ENCODE measurements at regions of chr19 and their contacts with region 1.

Region 1: DNA sequence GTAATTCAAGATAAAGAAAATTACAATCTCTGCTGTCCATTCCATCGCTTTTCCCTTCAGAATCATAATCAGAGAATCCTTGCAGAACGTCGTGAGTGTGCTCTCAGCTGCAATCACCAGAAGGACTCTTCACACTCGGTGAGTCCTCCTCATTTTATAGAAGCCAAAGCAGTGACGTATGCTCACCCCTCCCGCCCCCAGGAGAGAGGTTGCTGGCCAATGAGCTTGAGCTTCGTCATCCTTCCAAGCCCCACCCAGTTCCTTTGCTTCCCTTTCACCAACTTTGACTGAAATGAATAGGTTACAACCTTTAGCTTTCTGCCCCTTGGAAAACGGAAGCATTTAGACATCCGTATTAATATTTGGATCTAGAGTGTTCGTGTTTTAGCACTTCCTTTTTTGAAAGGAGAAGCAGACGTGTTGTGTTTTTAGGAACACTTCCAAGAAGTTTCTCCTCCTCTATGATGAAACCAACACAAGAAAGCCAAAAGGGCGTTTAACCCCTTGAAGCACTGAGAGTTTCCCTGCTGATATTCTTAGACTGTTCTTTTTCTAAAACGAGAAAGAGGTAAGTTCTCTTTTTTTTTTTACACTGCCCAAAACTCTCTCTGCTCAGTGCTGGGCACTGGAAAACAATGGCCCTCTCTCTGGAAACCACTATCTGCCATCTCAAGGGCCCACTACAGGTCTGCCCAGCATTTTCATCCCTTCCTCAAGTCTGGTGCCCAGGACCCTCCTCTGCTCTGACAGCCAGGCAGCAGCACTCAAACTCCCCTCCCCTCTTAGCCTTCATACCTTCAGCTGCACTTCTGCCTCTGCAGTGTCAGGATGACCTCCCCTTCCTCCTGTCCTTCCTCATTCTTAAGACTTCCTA is 44.3 kb upstream of the CEACAM21 start:
- DNase-seq: peak; percentile 74
- ATAC-seq: peak; percentile 78
- H3K4me3 Mint-ChIP-seq: peak overlapping the region; percentile 79
- H3K27ac Mint-ChIP-seq: peak overlapping the region; percentile 73
- H3K4me1 Mint-ChIP-seq: peaks cover 54% of the 10 kb centered on the region
- H3K27me3 Mint-ChIP-seq: no peaks in the 10 kb centered on the region

Region 2: GRCh38 chr19:41373993-41374392 is 157.7 kb before region 1 on chr19:
- POLR2A ChIA-PET with region 1: no interaction called
- DNase-seq: no peak
- ATAC-seq: no peak
- H3K4me3 Mint-ChIP-seq: no peak overlapping the region
- H3K27ac Mint-ChIP-seq: no peak overlapping the region
- H3K4me1 Mint-ChIP-seq: peaks cover 15% of the 10 kb centered on the region
- H3K27me3 Mint-ChIP-seq: no peaks in the 10 kb centered on the region

Region 3: DNA sequence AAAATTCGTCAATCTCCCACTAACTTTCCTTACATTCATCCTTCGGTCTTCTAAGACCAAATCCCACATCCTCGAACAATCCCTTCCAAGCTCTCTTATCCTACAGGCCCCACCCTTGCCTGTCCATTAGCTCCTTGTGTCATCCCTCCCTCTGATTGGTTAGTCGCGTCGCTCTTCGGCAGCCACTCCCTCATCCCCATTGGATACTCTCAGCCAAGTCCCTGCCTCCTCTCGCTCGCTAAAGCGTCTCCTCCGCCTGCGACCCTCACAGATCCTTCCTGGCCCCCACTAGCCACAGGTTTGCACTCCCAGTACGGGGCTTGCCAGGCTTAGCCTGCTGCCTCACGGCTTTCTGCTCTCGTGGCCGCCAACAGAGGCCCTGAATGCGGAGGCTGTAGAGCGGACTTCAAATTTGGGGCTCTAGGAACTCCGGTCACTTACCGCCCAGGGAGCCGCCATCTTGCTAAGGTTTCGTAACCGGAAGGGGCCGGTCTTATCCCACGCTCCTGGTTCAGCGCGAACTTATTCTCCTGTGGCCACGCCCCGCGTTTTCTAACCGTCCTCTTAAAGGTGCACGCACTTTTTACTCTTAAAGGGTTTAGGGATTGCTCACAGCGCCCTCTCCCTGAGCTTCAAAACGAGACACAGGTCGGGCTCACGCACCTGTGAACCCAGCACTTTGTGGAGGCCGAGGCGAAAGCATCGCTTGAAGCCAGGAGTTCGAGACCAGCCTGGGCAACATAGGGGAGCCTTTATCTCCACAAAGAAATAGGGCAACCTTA is 92.0 kb before region 1 on chr19 and contains the start of gene DMAC2:
- POLR2A ChIA-PET with region 1: interaction called, 14 read pairs
- DNase-seq: peak; percentile 89
- ATAC-seq: peak; percentile 96
- H3K4me3 Mint-ChIP-seq: no peak within 1 kb of the TSS
- H3K27ac Mint-ChIP-seq: peak within 1 kb of the TSS; percentile 47
- H3K4me1 Mint-ChIP-seq: peaks cover 12% of the 10 kb centered on the region
- H3K27me3 Mint-ChIP-seq: peaks cover 3% of the 10 kb centered on the region
- total RNA-seq, gene DMAC2: 41.3 to 42.6 TPM

Region 4: DNA sequence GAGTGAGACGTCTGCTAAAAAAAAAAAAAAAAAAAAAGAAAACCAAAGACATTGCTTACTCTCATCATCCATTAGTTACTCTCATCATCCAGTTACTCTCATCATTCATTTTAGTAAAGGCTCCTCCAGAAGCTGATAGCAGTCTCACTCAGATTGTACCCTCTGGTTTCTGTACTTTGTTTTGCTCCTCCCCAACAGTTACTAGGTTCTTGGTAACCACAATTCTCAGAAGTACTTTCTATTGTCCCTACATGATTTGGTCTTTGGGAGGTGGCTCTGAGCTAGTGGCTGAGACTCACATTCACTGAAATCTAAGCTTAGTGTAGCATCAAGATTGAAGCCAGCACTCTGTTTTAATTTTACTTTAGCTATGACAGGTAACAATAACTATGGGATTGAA is 74.4 kb before region 1 on chr19:
- POLR2A ChIA-PET with region 1: interaction called, 14 read pairs
- DNase-seq: no peak
- ATAC-seq: peak; percentile 99
- H3K4me3 Mint-ChIP-seq: peak overlapping the region; percentile 70
- H3K27ac Mint-ChIP-seq: peak overlapping the region; percentile 82
- H3K4me1 Mint-ChIP-seq: peaks cover 21% of the 10 kb centered on the region
- H3K27me3 Mint-ChIP-seq: peaks cover 8% of the 10 kb centered on the region

Region 5: GRCh38 chr19:41479757-41480191 is 51.9 kb before region 1 on chr19:
- POLR2A ChIA-PET with region 1: no interaction called
- DNase-seq: no peak
- ATAC-seq: no peak
- H3K4me3 Mint-ChIP-seq: no peak overlapping the region
- H3K27ac Mint-ChIP-seq: no peak overlapping the region
- H3K4me1 Mint-ChIP-seq: no peaks in the 10 kb centered on the region
- H3K27me3 Mint-ChIP-seq: peaks cover 35% of the 10 kb centered on the region

Region 6: DNA sequence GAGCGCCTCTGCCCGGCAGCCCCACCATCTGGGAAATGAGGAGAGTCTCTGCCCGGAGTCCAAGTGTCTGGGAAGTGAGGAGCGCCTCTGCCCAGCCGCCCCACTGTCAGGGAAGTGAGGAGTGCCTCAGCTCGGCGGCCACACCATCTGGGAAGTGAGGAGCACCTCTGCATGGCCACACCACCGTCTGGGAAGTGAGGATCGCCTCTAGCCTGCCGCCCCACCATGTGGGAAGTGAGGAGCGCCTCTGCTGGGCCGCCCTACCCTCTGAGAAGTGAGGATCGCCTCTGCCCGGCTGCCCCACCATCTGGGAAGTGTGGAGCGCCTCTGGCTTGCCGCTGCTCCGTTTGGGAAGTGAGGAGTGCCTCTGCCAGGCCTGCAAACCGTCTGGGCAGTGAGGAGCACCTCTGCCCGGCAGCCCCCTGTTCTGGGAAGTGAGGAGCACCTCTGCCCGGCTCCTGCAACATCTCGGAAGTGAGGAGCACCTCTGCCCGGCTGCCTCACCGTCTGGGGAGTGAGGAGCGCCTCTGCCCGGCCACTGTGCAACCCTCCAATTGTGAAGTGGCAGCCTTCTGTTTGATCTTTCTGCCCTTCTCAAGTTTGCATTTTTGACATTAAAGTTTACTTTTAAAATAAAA is 16.5 kb before region 1 on chr19:
- POLR2A ChIA-PET with region 1: no interaction called
- DNase-seq: no peak
- ATAC-seq: no peak
- H3K4me3 Mint-ChIP-seq: no peak overlapping the region
- H3K27ac Mint-ChIP-seq: no peak overlapping the region
- H3K4me1 Mint-ChIP-seq: peaks cover 13% of the 10 kb centered on the region
- H3K27me3 Mint-ChIP-seq: peaks cover 17% of the 10 kb centered on the region

Region 7: DNA sequence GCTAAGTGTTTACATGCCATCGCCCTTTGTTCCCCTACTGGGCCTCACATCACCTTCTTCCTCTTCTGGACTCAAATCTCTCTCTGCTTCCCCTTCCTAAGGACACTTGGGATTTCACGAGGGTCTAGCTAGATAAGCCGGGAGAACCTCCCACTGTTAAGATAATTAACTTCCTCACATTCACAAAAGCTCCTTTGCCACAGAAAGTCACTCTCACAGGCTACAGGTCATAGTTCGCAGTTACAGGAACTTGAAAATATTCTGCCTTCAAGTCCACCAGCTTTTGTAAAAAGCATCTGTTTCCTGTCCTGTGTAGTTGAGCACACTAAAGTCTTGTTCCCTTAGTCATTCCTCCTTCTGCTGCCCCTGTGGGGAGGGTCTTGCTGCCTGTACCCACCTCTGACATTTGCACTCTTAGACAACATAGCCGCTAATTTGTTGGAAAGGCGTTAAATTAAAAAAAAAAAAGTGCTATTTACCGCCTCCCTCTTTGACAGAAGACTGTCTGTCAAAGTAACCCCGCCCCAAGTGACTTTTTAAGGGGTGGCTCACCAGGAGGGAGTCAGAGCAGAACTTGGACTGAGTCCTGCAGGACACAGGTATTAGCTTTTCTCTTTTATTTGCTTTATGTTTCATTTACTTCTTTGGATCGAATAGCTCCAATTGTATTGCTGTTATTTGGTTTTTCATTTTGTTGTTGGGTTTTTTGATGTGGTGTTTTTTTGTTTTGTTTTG is 17.4 kb after region 1 on chr19:
- POLR2A ChIA-PET with region 1: interaction called, 39 read pairs
- DNase-seq: peak; percentile 82
- ATAC-seq: peak; percentile 73
- H3K4me3 Mint-ChIP-seq: peak overlapping the region; percentile 93
- H3K27ac Mint-ChIP-seq: peak overlapping the region; percentile 99
- H3K4me1 Mint-ChIP-seq: peaks cover 52% of the 10 kb centered on the region
- H3K27me3 Mint-ChIP-seq: no peaks in the 10 kb centered on the region

Region 8: DNA sequence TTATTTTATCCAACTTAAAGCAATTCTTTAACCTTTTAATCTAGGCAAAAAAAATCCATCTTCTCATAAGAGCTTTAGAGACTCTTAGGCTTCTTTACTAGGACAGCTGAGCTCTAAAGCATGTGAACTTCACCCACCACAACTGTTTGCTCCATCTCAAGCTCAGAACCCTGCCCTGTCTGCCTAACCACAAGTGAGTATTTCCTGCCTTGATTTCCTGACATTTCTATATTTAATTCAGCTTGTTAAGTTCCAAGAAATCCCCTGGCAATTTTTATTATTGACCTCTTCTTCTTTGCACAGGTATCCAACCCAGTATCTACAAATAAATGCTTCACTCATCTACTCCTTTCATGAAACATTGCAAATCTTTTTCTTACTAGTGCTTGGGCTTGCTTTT is 23.2 kb after region 1 on chr19:
- POLR2A ChIA-PET with region 1: interaction called, 10 read pairs
- DNase-seq: no peak
- ATAC-seq: peak; percentile 70
- H3K4me3 Mint-ChIP-seq: peak overlapping the region; percentile 93
- H3K27ac Mint-ChIP-seq: peak overlapping the region; percentile 99
- H3K4me1 Mint-ChIP-seq: peaks cover 55% of the 10 kb centered on the region
- H3K27me3 Mint-ChIP-seq: no peaks in the 10 kb centered on the region

Region 9: DNA sequence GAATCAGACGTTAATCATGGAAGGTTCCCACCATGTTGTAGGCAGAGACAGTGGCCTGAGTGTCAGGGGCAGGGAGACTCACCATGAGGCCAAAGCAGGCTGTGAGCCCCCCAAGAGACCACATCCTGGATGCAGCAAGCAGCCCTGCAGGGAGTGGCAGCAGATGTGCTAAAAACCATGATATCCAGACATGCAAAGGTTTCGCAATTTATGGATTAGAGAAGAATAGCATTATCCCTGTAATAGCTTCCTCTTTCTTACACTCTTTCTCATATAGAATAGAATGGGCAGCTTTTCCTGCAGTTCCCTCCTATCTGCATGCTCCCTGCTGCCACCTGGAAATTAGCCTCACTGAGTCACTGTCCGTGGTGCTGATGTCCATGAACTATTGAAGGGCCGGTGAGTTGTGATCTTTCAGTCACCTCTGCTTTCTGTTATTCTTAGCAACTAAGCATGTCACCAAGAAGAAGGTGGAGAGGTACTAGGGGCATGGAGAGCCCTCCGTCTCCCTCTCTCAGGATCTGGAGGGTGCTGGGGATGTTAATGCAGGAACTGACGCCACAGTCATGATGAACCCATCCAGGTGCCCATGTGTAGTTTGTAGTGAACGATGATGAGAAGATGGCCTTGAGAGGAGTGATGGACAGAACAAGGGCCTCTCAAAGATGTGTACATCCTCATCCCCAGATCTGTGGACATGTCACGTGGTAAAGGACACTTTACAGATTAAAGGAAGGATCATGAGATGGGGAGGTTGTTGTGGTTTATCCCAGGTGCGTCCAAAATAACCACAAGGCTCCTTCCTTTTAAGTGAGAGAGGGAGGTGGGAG is 85.3 kb after region 1 on chr19:
- POLR2A ChIA-PET with region 1: no interaction called
- DNase-seq: no peak
- ATAC-seq: no peak
- H3K4me3 Mint-ChIP-seq: no peak overlapping the region
- H3K27ac Mint-ChIP-seq: no peak overlapping the region
- H3K4me1 Mint-ChIP-seq: peaks cover 3% of the 10 kb centered on the region
- H3K27me3 Mint-ChIP-seq: no peaks in the 10 kb centered on the region